ENCODE measurements at regions of chr14 and their contacts with region 1.

Region 1: GRCh38 chr14:23528555-23528954 is 23.0 kb downstream of the ZFHX2 start:
- DNase-seq: no peak
- H3K4me3 ChIP-seq: no peak overlapping the region
- H3K27me3 ChIP-seq: no peaks in the 10 kb centered on the region
- CTCF ChIP-seq: 0 out of 2 replicates have a peak, but pooled peaks have one; percentile 27

Region 2: DNA sequence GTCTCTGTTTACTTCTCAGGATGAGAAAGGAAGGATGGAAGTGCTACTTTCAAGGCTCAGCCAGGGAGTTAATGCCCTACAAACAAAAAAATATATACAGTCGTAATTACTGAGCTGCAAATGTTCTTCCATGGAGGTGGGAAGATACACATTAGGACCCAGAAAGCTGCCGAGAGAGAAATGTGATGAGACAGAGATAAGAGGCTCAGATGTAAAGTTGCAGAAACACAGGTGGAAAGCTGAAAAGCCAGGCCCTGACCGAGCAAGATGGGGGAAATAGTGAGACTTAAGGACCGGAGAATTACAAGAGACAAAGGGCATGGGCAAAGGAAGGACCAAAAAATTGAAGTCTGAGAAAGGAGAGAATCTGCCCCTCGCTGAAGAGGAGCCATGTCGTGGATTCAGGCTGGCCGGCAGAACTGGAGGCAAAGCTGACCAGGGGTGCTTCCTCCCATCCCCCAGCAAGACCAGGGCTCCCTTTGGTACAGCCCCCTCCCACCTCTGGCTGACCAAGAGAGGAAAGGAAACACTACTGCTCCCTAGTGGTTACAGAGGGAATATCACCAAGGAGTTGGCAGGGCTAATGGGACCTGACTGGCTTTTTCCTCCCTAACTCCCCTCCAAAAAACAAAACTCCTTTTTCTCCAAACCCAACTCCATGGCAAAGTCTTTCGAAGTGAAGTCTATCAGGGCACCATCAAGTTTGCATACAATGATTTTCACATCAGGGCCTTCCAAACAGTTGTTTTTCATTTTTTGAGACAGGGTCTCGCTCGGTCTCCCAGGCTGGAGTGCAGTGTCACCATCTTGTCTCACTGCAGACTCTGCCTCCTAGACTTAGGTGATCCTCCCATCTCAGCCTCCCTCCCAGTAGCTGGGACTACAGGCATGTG is 10.9 kb after region 1 on chr14:
- CTCF ChIA-PET with region 1: interaction called, 29 read pairs
- POLR2A ChIA-PET with region 1: no interaction called
- DNase-seq: no peak
- H3K4me3 ChIP-seq: no peak overlapping the region
- H3K27me3 ChIP-seq: no peaks in the 10 kb centered on the region
- CTCF ChIP-seq: peak; percentile 63